ENCODE measurements at regions of chr5 and their contacts with region 1.

Region 1: DNA sequence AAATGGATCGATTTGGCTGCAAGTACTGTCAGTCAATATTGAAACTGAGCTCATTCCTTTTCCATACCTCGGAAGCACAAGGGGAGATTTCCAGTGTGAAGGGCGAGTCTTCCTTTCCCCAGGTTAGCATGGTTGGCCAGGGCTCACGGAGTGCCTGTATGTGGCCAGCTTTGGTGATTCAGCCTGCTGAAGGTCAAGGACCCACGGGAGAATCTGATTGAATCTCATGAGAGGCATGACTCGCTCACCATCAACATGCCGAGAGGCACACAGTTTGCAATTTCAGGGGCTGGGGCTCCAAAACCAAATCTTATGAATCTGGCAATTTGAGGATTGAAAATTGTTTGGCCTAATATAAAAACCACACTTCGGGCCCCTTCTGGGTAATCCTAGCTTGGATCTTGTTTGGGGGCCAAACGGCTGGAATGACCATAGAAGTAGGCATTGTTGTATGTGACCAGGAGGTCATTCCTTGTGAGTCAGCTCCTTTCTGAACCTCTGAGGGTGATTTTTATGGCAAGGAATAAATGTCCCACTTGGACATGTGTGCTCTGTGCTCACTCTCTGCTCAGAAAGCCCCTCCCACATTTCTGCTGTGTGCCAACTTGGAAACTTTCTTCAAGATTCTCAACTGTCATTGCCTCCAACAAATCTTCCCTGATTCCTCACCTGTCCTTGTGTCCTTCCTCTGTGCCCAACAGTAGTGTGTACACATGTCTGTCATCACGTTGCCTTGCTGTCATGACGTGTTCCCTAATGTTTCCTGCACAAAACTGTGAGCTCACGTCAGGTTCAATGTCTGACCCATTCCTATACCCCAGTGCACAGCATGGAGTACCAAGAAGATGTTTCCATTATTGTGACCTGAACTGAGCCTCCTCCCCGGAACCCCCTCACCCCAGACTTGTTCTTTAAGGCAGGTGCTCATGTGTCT is 70.0 kb downstream of the DOCK2 start:
- DNase-seq: no peak
- ATAC-seq: no peak

Region 2: GRCh38 chr5:169435506-169436229 is 271.4 kb before region 1 on chr5:
- intact Hi-C with region 1: no loop called
- DNase-seq: no peak
- ATAC-seq: no peak

Region 3: DNA sequence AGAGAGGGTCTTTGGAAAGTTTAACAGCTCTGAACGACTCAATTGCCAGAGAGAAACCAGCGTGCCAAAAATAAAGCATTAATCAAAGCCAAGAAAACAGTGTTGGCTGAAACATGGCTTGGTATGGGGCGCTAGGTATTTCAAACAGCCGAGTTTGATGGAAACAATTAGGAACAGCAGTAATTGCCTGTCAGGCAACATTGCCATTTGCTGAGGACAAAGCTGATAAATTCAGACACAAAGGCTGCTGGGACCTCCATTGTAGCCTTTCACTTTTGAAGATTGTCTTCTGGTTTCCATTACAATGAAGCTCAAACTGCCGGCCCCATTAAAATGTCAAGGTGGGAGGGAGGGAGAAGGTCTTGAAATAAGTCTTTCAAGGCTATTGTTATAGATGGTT is 248.8 kb before region 1 on chr5:
- intact Hi-C with region 1: no loop called
- DNase-seq: no peak
- ATAC-seq: no peak

Region 4: GRCh38 chr5:169980418-169981053 is 273.5 kb after region 1 on chr5 and contains the start of gene INSYN2B:
- intact Hi-C with region 1: loop called (anchors 2 kb)
- DNase-seq: no peak
- ATAC-seq: peak; percentile 94
- total RNA-seq, gene INSYN2B: 0.87 TPM